ENCODE measurements at regions of chr13 and their contacts with region 1.

Region 1: GRCh38 chr13:19863323-19864023 is at the start of gene ZMYM5:
- DNase-seq: peak; percentile 99
- H3K4me3 ChIP-seq: peak within 1 kb of the TSS; percentile 86 to 90
- H3K27ac ChIP-seq: peak within 1 kb of the TSS; percentile 97 to 99
- H3K4me1 ChIP-seq: no peaks in the 10 kb centered on the region
- H3K27me3 ChIP-seq: no peaks in the 10 kb centered on the region
- CTCF ChIP-seq: peak in 3 of 4 experiments; percentile 16 to 48 (median 31)
- POLR2A ChIP-seq: peak; percentile 94
- total RNA-seq, gene ZMYM5: 19.6 to 21.5 TPM

Region 2: DNA sequence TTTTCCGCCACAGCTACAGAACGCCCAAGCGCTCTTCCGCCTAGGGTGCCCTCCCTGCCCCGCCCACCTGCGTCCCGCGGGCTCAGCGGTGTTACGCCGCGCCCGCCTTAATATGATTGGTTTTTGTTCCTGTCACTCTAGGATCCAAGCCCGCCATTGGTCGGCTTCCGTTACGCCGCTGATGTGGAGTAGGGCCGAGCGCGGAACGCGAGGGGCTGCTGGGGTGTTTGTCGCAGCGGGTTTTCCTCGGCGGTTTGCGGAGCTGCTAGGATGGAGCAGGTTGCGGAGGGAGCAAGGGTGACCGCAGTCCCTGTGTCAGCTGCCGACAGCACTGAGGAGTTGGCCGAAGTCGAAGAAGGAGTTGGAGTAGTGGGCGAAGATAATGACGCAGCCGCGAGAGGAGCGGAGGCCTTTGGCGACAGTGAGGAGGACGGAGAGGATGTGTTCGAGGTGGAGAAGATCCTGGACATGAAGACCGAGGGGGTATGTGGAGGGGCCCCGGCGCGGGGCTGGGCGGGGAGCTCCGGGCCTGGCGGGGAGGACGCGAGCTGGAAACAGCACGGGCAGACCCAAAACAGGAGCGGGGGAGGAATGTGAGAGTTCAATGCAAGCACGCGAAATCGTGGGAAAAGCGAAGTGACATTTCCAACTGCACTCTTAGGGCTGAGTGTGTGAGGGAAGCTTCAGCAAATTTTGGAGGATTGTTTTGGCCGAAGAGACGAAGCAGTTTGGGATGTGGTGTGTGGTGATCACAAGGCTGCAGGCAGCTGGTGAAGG is 229.8 kb before region 1 on chr13 and contains the start of gene MPHOSPH8:
- intact Hi-C with region 1: loop called (anchors 5 kb)
- DNase-seq: peak; percentile 96
- H3K4me3 ChIP-seq: peak within 1 kb of the TSS; percentile 65 to 83
- H3K27ac ChIP-seq: peak within 1 kb of the TSS; percentile 94
- H3K4me1 ChIP-seq: peaks cover 9% of the 10 kb centered on the region
- H3K27me3 ChIP-seq: no peaks in the 10 kb centered on the region
- CTCF ChIP-seq: peak in 1 of 4 experiments; percentile 21
- POLR2A ChIP-seq: peak; percentile 92
- total RNA-seq, gene MPHOSPH8: 24.3 to 30.5 TPM

Measured in prostate gland (tissue), 2 donors.